CD8-positive, alpha-beta memory T cell (primary cell): ENCODE measurements at regions of chr1 and their contacts with region 1.

Region 1: DNA sequence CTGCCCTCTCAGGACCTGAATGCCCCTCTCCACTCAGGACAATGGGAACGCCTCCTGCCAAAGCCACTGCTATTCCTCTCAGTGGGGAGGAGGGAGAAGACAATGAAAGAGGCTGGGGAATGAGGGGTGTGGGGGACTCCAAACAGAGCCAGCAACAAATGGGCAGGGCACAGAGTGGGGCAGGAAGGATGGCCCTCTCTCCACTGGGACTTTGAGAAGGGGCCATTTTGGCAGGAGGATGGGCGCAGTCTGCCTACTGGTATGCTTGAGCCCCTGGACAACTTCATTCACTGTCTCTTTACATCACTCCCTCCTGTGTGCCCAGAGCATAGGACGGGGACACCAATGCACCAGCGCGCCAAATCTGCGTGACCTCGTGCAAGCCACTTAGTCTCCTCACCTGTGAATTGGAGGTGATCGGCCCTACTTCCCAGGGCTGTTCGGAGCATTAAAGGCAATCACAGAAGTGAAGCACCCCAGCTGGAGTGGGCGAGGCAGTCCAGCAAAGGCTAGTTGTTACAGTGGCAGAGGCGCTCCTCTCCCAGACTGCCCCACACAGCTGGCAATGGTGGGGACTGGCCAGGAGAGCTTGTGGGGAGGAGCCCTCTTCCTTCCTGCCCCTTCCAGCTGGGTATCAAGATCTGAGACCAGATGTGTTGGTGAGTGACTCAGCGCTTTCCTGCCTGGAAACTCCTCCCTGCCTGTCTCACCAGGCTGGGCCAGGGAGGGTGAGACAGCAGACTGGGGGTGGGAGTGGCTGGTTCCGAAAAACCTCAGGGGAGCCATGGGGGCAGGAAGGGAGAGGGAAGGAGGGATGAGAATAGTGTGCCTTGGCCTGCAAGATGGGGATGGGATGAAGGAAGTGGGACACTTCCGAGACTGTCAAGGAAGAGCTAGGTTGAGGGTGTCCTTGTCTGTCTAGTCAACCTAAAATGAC is 22.4 kb upstream of the SYNC start:
- DNase-seq: no peak
- H3K4me3 ChIP-seq: no peak overlapping the region
- H3K4me3 Mint-ChIP-seq: peak overlapping the region in 1 of 7 donors; percentile 40
- H3K27ac ChIP-seq: peak overlapping the region; percentile 57
- H3K27ac Mint-ChIP-seq: peak overlapping the region in 1 of 8 donors; percentile 29
- H3K4me1 ChIP-seq: peaks cover 11% of the 10 kb centered on the region
- H3K4me1 Mint-ChIP-seq: peaks cover 7 to 10% (median 8%) of the 10 kb centered on the region in 3 donors
- H3K27me3 ChIP-seq: no peaks in the 10 kb centered on the region
- H3K27me3 Mint-ChIP-seq: peaks cover 7 to 19% of the 10 kb centered on the region in 2 donors

Region 2: DNA sequence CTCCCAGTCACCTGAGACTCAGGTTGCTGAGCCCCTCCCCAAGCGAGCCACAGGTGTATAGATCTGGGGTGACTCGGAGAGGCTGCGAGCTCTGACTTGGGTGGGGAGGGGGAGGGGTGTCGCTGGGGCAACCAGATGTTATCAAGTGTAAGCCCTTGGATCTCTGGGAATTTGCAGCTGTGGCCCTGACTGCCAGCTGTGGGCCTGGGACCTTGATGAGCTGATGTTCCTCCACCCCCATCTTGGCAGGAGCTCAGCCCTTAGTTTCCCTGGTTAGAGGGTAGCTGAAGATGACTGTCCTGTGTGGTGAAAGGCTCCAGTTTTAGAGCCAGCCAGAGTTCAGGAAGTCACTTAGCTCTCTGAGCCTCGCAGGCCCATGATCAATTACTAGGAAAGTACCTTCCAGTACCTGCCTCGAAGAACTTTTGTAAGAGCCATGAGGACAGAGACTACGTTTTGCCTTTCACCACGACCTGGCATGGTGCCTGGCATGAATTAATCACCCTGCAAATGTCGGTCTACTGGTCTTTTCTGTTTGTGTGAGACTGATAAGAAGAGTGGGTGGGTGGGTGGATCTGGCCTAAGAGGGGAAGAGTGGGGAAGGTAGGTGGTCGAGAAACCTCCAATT is 36.4 kb after region 1 on chr1:
- CTCF ChIA-PET with region 1: no interaction called
- POLR2A ChIA-PET with region 1: no interaction called
- DNase-seq: no peak
- H3K4me3 ChIP-seq: no peak overlapping the region
- H3K4me3 Mint-ChIP-seq: no peak overlapping the region
- H3K27ac ChIP-seq: peak overlapping the region; percentile 12
- H3K27ac Mint-ChIP-seq: peak overlapping the region in 6 of 8 donors; percentile 5 to 69 (median 38)
- H3K4me1 ChIP-seq: peaks cover 30% of the 10 kb centered on the region
- H3K4me1 Mint-ChIP-seq: peaks cover 7 to 19% (median 11%) of the 10 kb centered on the region in 3 donors
- H3K27me3 ChIP-seq: no peaks in the 10 kb centered on the region
- H3K27me3 Mint-ChIP-seq: peaks cover 0 to 1% of the 10 kb centered on the region in 2 donors

Region 3: DNA sequence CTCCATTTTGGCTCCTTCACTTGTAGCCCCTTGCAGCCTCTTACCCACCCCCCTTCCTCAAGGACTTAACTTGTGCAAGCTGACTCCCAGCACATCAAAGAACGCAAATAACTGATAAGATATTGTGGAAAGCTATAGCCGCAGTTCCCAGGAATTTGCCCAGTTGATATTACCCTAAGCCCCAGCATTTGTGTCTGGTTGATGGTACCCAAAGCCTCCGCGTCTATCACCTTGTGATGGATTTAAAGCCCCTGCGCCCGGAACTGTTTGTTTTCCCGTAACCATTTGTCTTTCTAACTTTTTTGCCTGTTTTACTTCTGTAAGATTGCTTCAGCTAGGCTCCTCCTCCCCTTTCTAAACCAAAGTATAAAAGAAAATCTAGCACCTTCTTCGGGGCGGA is 86.3 kb after region 1 on chr1:
- CTCF ChIA-PET with region 1: no interaction called
- POLR2A ChIA-PET with region 1: interaction called, 10 read pairs
- DNase-seq: no peak
- H3K4me3 ChIP-seq: no peak overlapping the region
- H3K4me3 Mint-ChIP-seq: peak overlapping the region in 2 of 7 donors; percentile 13 to 46
- H3K27ac ChIP-seq: no peak overlapping the region
- H3K27ac Mint-ChIP-seq: peak overlapping the region in 5 of 8 donors; percentile 33 to 70 (median 34)
- H3K4me1 ChIP-seq: peaks cover 35% of the 10 kb centered on the region
- H3K4me1 Mint-ChIP-seq: peaks cover 61 to 79% (median 74%) of the 10 kb centered on the region in 3 donors
- H3K27me3 ChIP-seq: no peaks in the 10 kb centered on the region
- H3K27me3 Mint-ChIP-seq: no peaks in the 10 kb centered on the region